ENCODE measurements at regions of chr4 and their contacts with region 1.

Region 1: DNA sequence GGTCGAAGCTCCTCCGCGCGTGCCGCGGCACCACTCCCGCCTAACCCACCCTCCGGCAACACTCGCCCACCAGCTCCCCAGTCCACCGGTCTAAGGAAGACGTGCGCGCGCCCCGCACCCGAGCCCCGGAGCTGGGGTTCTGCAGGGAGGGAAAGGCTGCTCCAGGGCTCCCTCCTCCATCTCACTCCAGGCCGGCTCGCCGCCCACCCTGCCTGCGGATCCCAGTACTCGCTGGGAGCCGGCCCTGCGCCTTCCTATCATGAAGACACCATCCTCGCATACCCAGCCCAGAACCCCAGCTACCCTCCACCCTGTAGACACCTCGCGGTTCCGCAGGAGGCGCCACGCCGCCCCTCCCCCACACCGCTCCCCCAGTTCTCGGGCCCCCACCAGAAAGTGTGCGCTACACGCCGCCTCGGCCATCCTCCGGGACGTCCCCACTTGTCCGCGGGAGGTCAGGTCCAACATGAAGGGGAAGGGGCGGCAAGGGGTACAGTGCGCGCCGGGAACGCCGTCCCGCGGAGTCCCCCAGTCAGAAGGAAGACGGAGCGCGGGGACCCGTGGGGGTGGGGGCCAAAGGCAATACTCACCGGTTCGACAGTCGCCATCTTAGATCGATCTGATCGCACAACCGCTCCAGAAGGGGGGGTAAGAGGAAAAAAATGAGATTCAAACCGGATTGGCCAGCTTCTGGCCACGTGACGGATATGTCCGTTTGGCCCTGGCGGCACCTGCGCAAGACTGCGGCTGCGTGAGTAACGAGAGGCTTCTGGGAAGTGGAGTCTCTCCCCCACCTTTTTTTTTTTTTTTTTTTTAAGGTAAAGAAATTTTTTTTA is at the start of gene EIF4E:
- DNase-seq: peak; percentile 99
- ATAC-seq: peak; percentile 97
- total RNA-seq, gene EIF4E: 50.3 TPM

Region 2: DNA sequence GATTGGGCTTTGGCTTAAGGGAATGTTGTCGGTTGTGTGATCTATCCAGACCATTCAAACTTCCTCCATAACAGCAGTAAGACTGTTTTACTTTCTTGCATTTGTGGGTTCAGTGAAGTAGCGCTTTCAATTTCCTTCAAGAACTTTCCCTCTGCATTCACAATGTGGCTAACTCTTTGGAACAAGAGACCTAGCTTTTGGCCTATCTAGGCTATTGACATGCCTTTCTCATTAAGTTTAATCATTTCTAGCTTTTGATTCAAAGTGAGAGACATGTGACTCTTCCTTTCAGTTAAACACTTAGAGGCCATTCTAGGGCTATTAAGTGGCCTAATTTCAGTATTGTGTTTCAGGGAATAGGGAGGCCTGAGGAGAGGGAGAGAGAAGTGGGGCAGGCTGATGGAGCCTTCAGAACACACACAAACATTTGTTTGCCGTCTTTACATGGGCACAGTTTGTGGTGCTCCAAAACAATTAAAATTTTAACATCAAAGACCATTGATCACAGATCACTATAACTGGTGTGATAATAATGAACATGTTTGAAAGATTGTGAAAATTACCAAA is 125.8 kb after region 1 on chr4:
- intact Hi-C with region 1: no loop called
- DNase-seq: no peak
- ATAC-seq: no peak

Region 3: GRCh38 chr4:99088481-99089365 is 160.0 kb after region 1 on chr4 and contains the start of gene ADH5:
- intact Hi-C with region 1: loop called (anchors 10 kb)
- DNase-seq: peak; percentile 94
- ATAC-seq: peak; percentile 99
- total RNA-seq, gene ADH5: 197 TPM